Right ventricle myocardium inferior (tissue), 1 donor: ENCODE measurements at regions of chr10 and their contacts with region 1.

Region 1: DNA sequence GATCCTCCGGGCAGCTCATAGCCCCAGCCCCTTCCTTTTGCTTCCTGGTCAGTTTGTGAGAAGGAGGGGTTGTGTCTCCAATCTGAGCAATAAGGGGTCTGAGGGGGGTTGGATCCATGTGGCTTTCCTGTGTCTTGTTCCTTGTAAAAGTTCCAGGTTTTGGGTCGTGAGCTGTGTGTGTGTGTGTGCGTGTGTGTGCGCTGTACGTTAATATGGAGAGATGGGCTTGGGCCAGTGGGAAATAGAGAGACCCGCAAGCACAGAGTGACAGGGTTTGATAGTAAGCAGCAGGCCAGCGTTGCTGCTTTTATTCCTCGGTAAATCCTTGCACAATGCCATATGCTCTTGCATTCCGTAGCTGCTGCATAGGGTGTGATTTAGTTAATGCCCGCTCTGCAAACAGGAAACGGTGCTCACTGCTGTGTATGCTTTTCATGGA is 108.5 kb downstream of the TCF7L2 start:
- DNase-seq: no peak
- ATAC-seq: no peak

Region 2: GRCh38 chr10:112949875-112950507 is 108.6 kb before region 1 on chr10 and contains the start of gene TCF7L2:
- intact Hi-C with region 1: loop called (anchors 5 kb)
- DNase-seq: peak; percentile 99
- ATAC-seq: peak; percentile 95
- total RNA-seq, gene TCF7L2: 12.4 TPM

Region 3: DNA sequence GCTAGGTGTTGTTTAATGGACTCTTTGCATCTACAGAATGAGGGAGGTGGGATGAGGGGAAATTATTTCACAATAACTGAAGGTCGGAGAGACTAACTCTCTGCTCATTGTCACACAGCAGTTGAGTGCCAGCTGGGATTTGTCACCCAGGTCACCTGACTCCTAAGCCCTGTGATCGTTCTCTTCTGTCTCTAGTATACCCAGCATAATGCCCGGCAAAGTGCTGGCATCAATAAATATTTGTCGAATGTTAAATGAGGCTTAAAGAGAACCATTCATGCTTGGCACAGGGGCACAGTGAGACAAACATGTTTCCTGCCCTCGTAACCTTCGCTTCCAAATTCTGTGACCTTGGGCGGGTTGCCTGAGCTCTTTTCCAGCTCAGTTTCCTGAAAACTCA is 37.7 kb before region 1 on chr10:
- intact Hi-C with region 1: loop called (anchors 5 kb)
- DNase-seq: no peak
- ATAC-seq: peak; percentile 36

Region 4: GRCh38 chr10:113126229-113127201 is 68.0 kb after region 1 on chr10:
- intact Hi-C with region 1: loop called (anchors 5 kb)
- DNase-seq: peak; percentile 88
- ATAC-seq: peak; percentile 95

Region 5: GRCh38 chr10:114767101-114767985 is 1708.8 kb after region 1 on chr10:
- intact Hi-C with region 1: no loop called
- DNase-seq: peak; percentile 74
- ATAC-seq: peak; percentile 77